Posterior cingulate gyrus (tissue), 11 donors: ENCODE measurements at regions of chr7 and their contacts with region 1.

Region 1: DNA sequence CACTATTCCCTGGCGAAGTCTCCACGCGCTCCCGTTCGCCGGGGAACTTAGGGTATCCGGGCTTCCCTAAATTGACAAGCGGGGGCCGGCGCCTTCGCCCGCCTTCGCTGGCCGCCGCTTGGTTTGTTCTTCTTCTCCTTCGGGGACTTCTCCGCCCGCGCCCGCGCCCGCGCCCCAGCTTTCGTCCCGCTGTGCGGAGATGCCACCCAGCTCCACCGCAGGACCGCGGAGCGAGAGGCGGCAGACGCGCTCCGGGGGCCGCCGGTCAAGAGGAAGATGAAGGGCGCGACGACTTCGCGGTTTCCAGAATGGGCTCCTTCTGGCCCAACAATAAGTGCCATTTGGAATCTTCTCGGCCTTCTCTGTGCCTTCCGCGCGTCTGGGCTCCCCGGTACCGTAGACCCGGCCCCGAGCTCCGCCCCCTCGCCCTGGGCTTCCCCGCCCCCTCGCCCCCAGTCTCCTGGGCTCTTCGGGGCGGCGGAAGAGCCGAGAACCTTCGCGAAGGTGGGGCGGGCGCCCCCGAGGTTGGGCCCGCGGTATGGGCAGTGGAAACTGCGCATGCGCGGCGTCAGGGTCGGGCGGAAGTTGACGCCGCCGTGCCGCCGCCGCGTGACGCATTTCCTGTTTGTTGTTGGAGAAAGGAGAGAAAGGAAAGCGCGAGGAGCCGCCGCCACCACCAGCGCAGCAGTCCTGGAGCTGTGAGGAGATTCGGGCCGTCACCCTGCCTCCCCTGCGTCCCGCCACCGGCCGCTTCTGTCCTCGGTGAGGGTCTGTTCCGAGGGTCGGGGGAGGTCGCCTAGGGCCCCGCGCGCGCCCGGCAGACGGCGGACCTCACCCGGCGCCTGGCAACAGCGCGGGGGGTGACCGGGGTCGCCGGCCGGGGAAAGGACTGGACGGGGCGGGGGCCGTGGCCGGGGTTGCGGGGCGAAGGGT is at the start of gene DNAJB6:
- DNase-seq: peak; percentile 82 to 98 (median 90)

Region 2: DNA sequence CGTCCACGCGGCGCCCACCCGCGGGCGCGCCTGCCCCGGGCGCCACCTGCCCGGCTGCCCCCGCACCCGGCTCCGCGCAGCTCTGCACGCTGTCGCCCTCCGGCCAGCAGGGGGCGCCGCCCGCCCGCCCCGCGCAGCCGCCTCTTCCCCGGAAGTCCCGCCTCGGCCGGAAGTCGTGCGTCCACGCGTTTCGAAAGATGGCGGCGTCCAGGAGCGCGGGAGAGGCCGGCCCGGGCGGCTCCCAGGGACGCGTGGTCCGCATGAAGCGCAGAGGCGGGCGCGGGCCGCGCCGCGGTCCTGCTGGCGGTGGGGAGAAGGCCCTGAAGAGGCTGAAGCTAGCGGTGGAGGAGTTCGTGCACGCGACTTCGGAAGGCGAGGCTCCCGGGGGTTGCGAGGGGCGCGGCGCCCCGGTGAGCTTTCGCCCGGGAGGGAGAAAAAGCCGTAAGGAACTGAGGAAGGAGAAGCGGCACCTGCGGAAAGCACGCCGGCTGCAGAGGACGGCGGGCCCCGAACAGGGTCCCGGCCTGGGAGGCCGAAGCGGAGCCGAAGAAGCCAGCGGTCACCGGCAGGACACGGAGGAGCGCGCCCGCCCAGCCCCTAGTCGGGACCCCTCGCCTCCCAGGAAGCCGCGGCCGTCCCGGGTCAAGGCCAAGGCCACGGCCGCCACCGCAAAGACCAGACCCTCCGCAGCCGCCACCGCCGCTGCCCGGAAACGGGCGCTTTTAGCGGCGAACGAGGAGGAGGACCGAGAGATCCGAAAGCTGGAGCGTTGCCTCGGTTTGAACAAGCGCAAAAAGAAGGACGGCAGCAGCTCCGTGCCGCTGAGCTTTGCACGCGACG is 386.9 kb before region 1 on chr7 and contains the start of gene NOM1:
- intact Hi-C with region 1: loop called (anchors 10 kb)
- DNase-seq: peak; percentile 77 to 98 (median 88)

Region 3: DNA sequence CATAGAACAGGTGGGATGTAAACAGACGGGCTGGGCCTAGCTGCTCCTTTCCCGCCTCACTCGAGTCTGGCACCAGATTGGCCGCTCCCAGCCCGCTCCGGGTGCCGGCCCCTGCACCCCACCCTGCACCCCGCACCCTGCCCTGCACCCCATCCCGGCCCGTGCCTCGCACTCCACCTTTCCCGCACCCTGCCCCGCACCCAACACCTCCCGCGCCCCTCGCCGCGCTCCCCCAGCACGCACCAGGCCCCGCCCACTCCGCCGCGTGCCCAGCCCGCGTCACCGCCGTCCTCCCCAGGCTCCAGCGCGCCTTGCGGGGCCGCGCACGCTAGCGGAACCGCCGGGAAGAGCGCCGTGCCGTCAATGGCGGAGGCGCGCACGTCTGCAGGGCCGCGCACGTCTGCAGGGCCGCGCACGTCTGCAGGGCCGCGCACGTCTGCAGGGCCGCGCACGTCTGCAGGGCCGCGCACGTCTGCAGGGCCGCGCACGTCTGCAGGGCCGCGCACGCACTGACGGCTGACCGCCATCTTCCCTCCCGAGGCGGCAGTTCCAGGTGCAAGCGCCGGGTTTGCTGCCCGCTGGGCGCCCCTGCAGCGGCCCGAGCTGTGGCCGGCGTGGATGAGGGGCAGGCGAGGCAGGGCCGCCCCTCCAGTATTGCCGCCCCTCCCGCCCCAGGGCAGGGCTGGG is 198.1 kb before region 1 on chr7 and contains the start of gene UBE3C:
- intact Hi-C with region 1: loop called (anchors 10 kb)
- DNase-seq: peak; percentile 81 to 99 (median 86)

Region 4: GRCh38 chr7:157273208-157274093 is 63.2 kb before region 1 on chr7:
- intact Hi-C with region 1: loop called (anchors 10 kb)
- DNase-seq: peak in 9 of 10 donors; percentile 46 to 94 (median 60)